HAP-1 (cell line): ENCODE measurements at regions of chr1 and their contacts with region 1.

Region 1: DNA sequence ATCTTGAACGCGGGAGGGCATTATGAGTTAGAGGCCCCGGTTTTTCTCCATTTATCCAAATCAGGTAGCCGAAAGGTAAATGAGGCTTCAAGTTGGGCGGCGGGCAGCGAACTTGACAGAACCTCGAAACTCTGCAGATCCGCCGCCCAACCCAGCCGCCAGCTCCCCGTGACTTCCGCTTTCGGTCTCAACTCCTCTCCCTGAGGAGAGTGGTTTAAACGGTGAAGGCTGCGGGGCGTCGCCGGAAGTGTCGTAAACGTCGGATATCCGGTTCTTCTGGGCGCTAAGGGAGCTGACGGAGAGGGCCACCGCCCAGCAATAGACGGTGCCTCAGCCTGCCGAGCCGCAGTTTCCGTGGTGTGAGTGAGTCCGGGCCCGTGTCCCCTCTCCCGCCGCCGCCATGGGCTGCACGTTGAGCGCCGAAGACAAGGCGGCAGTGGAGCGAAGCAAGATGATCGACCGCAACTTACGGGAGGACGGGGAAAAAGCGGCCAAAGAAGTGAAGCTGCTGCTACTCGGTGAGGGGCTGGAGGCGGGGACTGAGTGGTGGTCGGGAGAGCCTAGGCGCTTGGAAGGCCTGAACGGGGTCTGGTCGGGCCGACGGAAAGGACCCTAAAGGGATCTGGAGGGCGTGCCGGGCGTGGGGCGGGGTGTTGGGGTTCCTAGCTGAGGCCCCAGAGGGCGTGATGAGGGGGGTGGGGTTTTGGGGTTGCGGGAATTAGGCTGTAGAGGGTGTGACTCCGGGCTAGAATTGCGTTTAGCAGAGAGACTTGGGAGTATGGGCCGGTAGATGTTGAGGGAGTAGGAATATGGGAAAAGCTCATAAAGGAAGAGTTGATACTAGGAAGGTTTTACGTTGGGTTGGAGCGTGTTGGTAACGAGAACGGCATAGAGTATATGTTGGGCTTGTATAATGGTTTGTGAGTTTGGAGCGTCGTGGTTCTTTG is at the start of gene GNAI3:
- DNase-seq: peak; percentile 91 to 96
- H3K4me3 ChIP-seq: peak within 1 kb of the TSS; percentile 90
- H3K4me1 ChIP-seq: peaks cover 17% of the 10 kb centered on the region
- H3K27me3 ChIP-seq: no peaks in the 10 kb centered on the region

Region 2: DNA sequence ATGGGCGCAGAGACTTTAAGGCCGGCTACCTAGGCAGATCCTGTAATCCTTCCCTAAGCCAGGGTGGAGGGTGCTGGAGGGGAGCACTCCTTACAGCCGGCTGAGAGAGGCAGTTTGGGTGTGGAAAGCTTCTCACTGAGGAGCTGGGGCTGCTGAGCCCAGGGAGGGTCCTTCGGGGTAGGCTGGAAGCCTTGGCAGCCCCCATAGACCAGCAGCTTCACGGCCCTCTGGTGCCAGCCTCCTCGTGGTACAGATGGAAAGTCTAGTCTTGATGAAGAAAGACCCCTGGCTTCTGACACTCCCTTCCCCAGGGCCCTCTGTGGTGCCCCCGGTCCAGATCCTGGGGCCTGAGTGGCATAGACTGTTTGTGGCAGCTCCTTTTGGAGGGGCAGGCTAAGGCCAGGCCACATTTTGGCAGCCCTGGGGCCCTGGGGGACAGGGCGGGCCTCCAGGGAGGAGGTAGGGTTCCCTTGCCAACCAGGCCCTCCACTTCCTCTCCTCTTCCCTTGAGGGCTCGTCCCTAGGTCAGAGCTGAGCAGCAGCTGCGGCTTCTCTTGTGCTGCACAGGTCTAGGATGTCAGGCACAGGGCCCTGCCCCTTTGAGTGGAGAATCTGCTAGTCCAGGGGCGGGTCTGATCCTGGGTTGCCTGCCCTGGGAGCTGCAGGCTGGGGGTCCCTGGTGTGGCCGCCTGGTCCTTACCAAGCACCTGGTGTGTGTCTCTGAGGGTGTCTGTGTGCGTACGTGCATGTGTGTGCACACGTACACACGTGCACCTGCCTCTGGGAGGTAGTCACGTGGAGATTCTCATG is 75.8 kb after region 1 on chr1:
- in situ Hi-C with region 1: loop called (anchors 5 kb)
- DNase-seq: no peak
- H3K4me3 ChIP-seq: no peak overlapping the region
- H3K4me1 ChIP-seq: peaks cover under 1% of the 10 kb centered on the region
- H3K27me3 ChIP-seq: no peaks in the 10 kb centered on the region

Region 3: GRCh38 chr1:109773146-109773899 is 224.7 kb after region 1 on chr1:
- in situ Hi-C with region 1: loop called (anchors 5 kb)
- DNase-seq: peak; percentile 80 to 86
- H3K4me3 ChIP-seq: no peak overlapping the region
- H3K4me1 ChIP-seq: no peaks in the 10 kb centered on the region
- H3K27me3 ChIP-seq: no peaks in the 10 kb centered on the region

Region 4: GRCh38 chr1:109984456-109985275 is 436.1 kb after region 1 on chr1 and contains the start of gene AHCYL1:
- in situ Hi-C with region 1: loop called (anchors 10 kb)
- DNase-seq: peak; percentile 97 to 99
- H3K4me3 ChIP-seq: peak within 1 kb of the TSS; percentile 71
- H3K4me1 ChIP-seq: peaks cover 13% of the 10 kb centered on the region
- H3K27me3 ChIP-seq: no peaks in the 10 kb centered on the region